BJ (cell line): ENCODE measurements at regions of chr13 and their contacts with region 1.

Region 1: GRCh38 chr13:41668130-41668757 is 210.9 kb downstream of the RGCC start:
- DNase-seq: peak; percentile 75
- H3K4me3 ChIP-seq: no peak overlapping the region
- H3K27me3 ChIP-seq: no peaks in the 10 kb centered on the region
- CTCF ChIP-seq: peak; percentile 78

Region 2: DNA sequence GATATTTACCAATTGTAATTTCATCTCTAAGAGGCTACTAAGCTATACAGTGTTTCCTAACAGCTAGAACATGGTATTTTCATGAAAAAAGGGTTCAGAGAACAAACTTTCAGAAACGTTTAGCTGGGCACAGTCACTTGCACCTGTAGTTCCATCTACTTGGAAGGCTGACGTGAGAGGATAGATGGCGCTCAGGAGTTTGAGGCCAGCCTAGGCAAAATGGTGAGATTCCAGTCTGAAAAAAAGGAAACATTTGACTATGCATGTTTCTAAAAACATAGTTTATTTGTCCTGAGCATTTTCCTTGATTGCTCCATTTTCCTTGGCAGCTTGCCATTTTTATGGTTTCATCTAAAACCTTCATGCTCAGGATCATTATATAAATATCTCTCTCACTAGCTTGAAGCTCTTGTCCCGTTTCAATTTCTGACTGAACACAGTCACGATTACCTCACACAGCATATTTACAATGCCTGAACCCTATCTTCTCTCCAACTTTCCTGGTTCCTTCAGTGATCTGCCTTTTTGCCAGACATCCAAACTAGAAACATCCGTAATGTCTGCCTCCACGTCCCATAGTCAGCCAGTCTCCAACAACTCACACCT is 10.1 kb before region 1 on chr13:
- CTCF ChIA-PET with region 1: interaction called, 18 read pairs
- POLR2A ChIA-PET with region 1: no interaction called
- DNase-seq: no peak
- H3K4me3 ChIP-seq: no peak overlapping the region
- H3K27me3 ChIP-seq: no peaks in the 10 kb centered on the region
- CTCF ChIP-seq: no peak

Region 3: DNA sequence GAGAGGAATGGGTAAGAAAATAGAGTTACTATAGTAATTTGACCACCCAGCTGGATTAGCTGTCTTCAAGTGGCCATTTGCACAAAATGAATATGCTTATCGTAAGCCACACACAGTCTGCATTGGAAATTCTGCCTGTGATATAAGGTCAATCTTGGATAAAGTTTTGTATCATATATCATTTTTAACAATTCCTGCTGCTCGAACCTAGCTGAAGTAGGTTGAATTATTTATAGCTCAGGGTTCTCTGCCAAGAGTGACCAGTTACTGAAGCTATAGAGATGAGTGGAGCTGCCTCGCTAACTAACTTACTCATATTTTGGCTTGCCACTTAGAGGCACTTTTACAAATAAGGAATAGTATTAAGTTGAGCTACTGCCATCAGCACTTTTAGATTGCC is 10.0 kb after region 1 on chr13:
- CTCF ChIA-PET with region 1: interaction called, 26 read pairs
- POLR2A ChIA-PET with region 1: no interaction called
- DNase-seq: no peak
- H3K4me3 ChIP-seq: no peak overlapping the region
- H3K27me3 ChIP-seq: no peaks in the 10 kb centered on the region
- CTCF ChIP-seq: no peak

Region 4: DNA sequence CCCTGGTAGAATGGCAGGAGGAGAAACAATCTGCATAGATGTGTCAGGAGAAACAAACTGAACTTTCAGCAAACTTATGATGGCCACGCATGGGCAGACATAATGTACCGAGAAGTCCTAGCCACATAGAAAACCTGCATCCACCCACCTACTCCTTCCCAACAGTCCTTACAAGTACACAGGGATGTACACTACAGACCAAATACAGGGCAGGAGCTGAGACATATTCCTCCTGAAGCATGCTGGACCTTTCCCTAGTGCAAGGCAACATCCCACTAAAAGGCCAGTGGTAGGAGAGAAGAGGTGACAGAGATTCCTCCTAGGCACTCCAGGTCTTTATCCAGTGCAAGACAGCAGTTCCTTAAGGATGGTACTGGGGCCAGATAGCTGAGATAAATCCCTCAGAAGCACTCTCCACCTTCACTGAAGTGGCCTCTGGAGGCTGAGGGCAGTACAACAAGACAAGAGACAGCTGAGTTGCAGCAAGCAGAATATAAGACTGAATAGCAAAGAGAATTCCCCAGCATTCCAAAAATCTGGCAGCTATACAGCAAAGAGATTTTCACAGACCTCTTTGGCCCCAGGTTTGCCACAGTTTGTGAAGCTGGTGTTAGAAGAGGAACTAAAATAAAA is 274.3 kb after region 1 on chr13:
- CTCF ChIA-PET with region 1: interaction called, 16 read pairs
- POLR2A ChIA-PET with region 1: no interaction called
- DNase-seq: no peak
- H3K4me3 ChIP-seq: no peak overlapping the region
- H3K27me3 ChIP-seq: no peaks in the 10 kb centered on the region
- CTCF ChIP-seq: peak; percentile 67

Region 5: DNA sequence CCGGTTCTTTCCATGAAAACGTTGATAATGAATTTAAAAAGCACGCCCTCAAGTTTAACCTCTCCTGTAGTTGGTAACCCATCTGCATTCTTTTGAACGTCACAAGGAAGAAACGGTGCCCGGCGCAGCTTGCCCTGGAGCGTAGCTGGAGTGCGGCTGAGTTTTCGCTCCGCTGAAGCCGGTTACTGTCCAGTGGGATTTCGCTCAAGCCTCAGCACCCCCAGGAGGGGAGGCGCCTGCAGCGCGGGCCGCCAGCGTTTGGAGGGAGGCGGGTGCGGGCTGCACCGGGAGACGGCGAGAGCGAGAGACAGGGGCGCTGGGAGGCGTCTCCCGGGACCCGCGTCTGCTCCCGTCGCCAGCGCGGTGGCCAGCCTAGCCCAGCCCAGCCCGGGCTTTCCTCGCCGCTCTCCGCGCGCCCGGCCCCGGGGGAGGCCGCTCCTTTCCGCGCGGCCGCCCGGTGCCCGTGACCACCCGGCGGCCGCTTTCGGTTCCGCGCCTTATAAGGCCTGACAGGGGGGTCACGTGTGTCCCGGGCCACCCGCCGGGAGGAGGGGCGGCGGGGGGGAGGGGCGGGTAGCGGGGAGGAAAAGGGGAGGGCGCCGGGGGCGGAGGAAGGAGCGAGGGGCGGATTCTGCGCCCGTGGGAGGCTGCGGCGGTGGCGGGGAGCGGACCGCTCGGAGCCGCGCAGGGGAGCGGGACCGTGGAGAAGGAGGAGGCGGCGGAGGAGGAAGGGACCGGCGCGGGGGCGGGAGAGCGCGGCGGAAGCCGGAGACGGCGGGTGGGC is 371.9 kb after region 1 on chr13:
- CTCF ChIA-PET with region 1: interaction called, 18 read pairs
- POLR2A ChIA-PET with region 1: no interaction called
- DNase-seq: no peak
- H3K4me3 ChIP-seq: peak overlapping the region; percentile 61
- H3K27me3 ChIP-seq: no peaks in the 10 kb centered on the region
- CTCF ChIP-seq: no peak

Region 6: DNA sequence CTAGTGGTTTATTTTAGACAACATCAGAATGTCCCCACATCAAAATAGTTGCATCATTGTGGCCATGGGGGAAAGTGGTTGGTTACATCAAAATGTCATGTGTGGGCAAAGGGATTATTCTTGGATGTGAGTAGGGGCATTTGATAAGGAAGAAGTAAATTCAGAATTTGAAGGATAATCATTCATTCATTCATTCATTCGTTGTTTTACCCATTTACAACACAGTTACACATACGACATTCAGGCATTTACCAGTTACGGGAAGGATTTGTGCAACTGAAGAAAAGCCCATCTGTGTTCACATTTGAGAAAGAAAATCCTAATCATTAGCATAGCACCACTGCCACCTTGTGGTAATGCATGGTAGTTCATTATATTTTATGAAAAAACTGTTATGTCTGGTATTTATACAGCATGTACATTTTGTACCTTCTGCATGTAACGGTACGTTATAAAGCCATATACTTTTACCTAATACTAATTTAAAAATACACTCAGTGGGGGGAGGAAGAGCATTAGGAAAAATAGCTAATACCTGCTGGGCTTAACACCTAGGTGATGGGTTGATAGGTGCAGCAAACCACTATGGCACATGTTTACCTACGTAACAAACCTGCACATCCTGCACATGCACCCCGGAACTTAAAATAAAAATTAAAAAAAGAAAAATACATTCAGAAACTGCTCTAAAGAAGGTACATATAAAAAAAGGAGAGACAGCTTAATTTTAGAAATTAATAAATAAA is 442.3 kb after region 1 on chr13:
- CTCF ChIA-PET with region 1: interaction called, 25 read pairs
- POLR2A ChIA-PET with region 1: no interaction called
- DNase-seq: peak; percentile 27
- H3K4me3 ChIP-seq: no peak overlapping the region
- H3K27me3 ChIP-seq: no peaks in the 10 kb centered on the region
- CTCF ChIP-seq: peak; percentile 56